ENCODE measurements at regions of chr6 and their contacts with region 1.

Region 1: DNA sequence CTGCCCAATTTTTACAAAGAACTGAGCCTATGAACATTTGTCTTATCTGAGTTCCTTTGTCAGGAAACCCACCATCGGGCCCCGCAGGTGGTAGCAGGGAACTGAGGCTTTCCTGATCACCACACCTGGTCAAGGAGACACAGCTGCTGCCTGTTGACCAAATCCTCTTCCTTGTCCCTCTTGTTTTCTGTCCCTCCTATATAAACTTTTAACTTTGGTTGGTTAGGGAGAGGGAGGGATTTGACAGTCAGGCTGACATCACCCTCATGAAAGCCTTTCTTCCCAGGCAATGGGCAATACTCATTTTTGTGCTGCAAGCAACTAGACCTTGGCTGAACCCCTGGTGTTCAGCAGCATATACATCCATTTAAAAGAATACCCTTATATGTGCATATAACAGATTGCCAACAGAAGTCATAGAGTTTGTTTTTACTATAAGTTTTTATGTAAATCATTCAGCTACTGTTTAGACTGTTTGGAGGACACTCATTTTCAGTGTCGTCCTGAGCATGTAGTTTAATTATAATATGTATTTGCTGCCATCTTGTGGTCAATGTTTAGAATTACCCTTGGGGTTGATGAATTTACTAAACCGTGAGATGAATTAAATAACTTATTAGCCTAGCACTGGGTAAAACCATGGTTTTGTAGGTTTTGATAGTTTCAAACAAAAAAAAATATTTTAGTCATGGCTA is 17.0 kb downstream of the CRISP1 start:
- DNase-seq: peak; percentile 80
- ATAC-seq: peak; percentile 85
- H3K4me3 ChIP-seq: no peak overlapping the region
- H3K27ac ChIP-seq: no peak overlapping the region
- H3K4me1 ChIP-seq: no peaks in the 10 kb centered on the region
- H3K27me3 ChIP-seq: no peaks in the 10 kb centered on the region
- CTCF ChIP-seq: peak; percentile 77

Region 2: GRCh38 chr6:49462927-49463611 is 386.3 kb before region 1 on chr6 and contains the starts of genes CENPQ and MMUT:
- CTCF ChIA-PET with region 1: no interaction called
- POLR2A ChIA-PET with region 1: no interaction called
- intact Hi-C with region 1: loop called (anchors 2 kb)
- DNase-seq: peak; percentile 96
- ATAC-seq: peak; percentile 97
- H3K4me3 ChIP-seq: peak within 1 kb of the TSS; percentile 85
- H3K27ac ChIP-seq: peak within 1 kb of the TSS; percentile 38
- H3K4me1 ChIP-seq: peaks cover 18% of the 10 kb centered on the region
- H3K27me3 ChIP-seq: no peaks in the 10 kb centered on the region
- CTCF ChIP-seq: no peak
- total RNA-seq, gene CENPQ: 8.3 and 9.7 TPM in 2 replicates
- total RNA-seq, gene MMUT: 3.7 and 4.5 TPM in 2 replicates

Region 3: DNA sequence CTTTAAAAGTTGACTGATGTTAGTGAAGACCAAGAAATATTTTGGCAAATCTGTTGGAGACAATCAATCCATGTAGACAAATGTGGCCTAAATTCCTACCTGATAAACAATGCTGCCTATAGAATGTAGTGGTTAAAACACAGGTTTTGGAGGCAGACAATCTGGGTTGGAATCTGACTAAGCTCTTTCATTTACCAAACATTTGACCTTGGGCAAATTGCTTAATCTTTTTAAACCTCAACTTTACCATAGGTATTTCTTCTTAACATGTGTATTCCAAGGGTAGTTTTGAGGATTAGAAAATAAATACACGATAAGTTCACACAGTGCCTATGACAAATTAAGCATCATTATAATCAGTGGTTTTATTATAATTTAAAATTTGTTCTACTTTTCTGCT is 224.2 kb before region 1 on chr6:
- CTCF ChIA-PET with region 1: interaction called, 17 read pairs
- POLR2A ChIA-PET with region 1: no interaction called
- intact Hi-C with region 1: loop called (anchors 1 kb)
- DNase-seq: peak; percentile 39
- ATAC-seq: no peak
- H3K4me3 ChIP-seq: no peak overlapping the region
- H3K27ac ChIP-seq: no peak overlapping the region
- H3K4me1 ChIP-seq: peaks cover 6% of the 10 kb centered on the region; the same call in 1 of the 2 replicates
- H3K27me3 ChIP-seq: no peaks in the 10 kb centered on the region
- CTCF ChIP-seq: no peak

Region 4: DNA sequence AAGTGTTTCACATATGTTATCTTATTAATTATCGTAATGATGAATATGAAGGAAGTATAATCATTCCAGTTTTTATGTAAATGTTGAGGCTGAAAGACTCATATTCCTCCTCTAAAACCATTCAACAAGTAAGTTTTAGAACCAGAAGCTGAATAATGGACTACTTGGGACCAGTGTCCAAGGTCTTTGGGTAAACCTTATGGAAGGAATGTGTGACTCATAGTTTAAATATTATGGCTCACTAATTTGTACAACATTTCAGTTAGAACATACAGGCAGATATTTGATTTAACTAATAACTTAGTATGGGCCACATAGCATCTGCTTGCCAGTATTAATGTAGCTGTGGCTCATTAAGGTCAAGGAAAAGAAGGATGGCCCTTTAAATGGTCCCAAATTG is 1178.9 kb after region 1 on chr6:
- CTCF ChIA-PET with region 1: no interaction called
- POLR2A ChIA-PET with region 1: no interaction called
- intact Hi-C with region 1: no loop called
- DNase-seq: peak; percentile 85
- ATAC-seq: peak; percentile 71
- H3K4me3 ChIP-seq: no peak overlapping the region
- H3K27ac ChIP-seq: peak overlapping the region; percentile 89
- H3K4me1 ChIP-seq: peaks cover 61% of the 10 kb centered on the region
- H3K27me3 ChIP-seq: no peaks in the 10 kb centered on the region
- CTCF ChIP-seq: no peak

Measured in PC-3 (cell line).